SK-N-SH (cell line): ENCODE measurements at regions of chr21 and their contacts with region 1.

Region 1: GRCh38 chr21:29477941-29478340 is 179.2 kb downstream of the BACH1 start:
- DNase-seq: no peak
- H3K4me3 ChIP-seq: no peak overlapping the region
- H3K27ac ChIP-seq: no peak overlapping the region
- H3K4me1 ChIP-seq: peaks cover 0 to 8% of the 10 kb centered on the region in 2 experiments; a peak in 1 of 4 replicates
- H3K27me3 ChIP-seq: no peaks in the 10 kb centered on the region
- CTCF ChIP-seq: no peak
- EP300 ChIP-seq: no peak
- RAD21 ChIP-seq: no peak

Region 2: GRCh38 chr21:28971171-28971570 is 506.8 kb before region 1 on chr21:
- CTCF ChIA-PET with region 1: no interaction called
- POLR2A ChIA-PET with region 1: no interaction called
- DNase-seq: no peak
- H3K4me3 ChIP-seq: no peak overlapping the region
- H3K27ac ChIP-seq: peak overlapping the region; percentile 57 to 67; a peak in 3 of 4 replicates
- H3K4me1 ChIP-seq: peaks cover 0 to 7% of the 10 kb centered on the region in 2 experiments; a peak in 3 of 4 replicates
- H3K27me3 ChIP-seq: no peaks in the 10 kb centered on the region
- CTCF ChIP-seq: no peak
- EP300 ChIP-seq: peak in 1 of 2 experiments; percentile 46; a peak in 1 of 4 replicates
- RAD21 ChIP-seq: no peak

Region 3: DNA sequence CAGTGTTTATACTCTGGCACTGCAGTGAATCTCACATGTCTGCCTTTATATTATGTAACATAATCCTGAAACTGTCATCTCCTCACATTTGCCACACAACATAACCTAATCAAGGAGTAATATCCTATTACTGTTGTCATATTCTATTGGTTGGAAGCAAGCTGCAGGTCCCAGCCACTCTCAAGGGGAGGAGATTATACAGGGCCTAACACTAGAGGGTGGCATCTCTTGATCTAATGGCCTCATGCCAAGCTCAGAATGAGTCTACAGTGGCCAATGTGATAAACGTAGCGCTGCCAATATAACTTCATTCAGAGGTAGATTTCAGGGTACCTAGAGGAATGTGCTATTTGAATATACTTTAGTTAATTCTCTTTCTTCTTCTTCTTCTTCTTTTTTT is 12.4 kb before region 1 on chr21:
- CTCF ChIA-PET with region 1: interaction called, 13 read pairs
- POLR2A ChIA-PET with region 1: no interaction called
- DNase-seq: peak; percentile 54
- H3K4me3 ChIP-seq: no peak overlapping the region
- H3K27ac ChIP-seq: no peak overlapping the region
- H3K4me1 ChIP-seq: no peaks in the 10 kb centered on the region
- H3K27me3 ChIP-seq: no peaks in the 10 kb centered on the region
- CTCF ChIP-seq: no peak
- EP300 ChIP-seq: peak in 1 of 2 experiments; percentile 20; a peak in 1 of 4 replicates
- RAD21 ChIP-seq: no peak

Region 4: GRCh38 chr21:29849735-29850176 is 371.8 kb after region 1 on chr21:
- CTCF ChIA-PET with region 1: interaction called, 17 read pairs
- POLR2A ChIA-PET with region 1: no interaction called
- DNase-seq: peak; percentile 50
- H3K4me3 ChIP-seq: no peak overlapping the region
- H3K27ac ChIP-seq: no peak overlapping the region
- H3K4me1 ChIP-seq: no peaks in the 10 kb centered on the region
- H3K27me3 ChIP-seq: no peaks in the 10 kb centered on the region
- CTCF ChIP-seq: peak; percentile 82
- EP300 ChIP-seq: no peak
- RAD21 ChIP-seq: peak; percentile 84